ENCODE measurements at regions of chr7 and their contacts with region 1.

Region 1: GRCh38 chr7:87173471-87173870 is 21.2 kb downstream of the DMTF1 start:
- DNase-seq: no peak
- ATAC-seq: no peak
- H3K4me3 ChIP-seq: no peak overlapping the region
- H3K27ac ChIP-seq: no peak overlapping the region
- H3K4me1 ChIP-seq: peaks cover 0 to 10% (median 0%) of the 10 kb centered on the region in 9 donors
- H3K27me3 ChIP-seq: no peaks in the 10 kb centered on the region
- CTCF ChIP-seq: no peak

Region 2: GRCh38 chr7:87435546-87435945 is 262.1 kb after region 1 on chr7:
- intact Hi-C with region 1: loop called in 1 of 10 experiments (anchors 10 kb)
- DNase-seq: no peak
- ATAC-seq: no peak
- H3K4me3 ChIP-seq: no peak overlapping the region
- H3K27ac ChIP-seq: no peak overlapping the region
- H3K4me1 ChIP-seq: no peaks in the 10 kb centered on the region
- H3K27me3 ChIP-seq: no peaks in the 10 kb centered on the region
- CTCF ChIP-seq: no peak

Measured in heart right ventricle (tissue), 16 donors.